ENCODE measurements at regions of chr1 and their contacts with region 1.

Region 1: DNA sequence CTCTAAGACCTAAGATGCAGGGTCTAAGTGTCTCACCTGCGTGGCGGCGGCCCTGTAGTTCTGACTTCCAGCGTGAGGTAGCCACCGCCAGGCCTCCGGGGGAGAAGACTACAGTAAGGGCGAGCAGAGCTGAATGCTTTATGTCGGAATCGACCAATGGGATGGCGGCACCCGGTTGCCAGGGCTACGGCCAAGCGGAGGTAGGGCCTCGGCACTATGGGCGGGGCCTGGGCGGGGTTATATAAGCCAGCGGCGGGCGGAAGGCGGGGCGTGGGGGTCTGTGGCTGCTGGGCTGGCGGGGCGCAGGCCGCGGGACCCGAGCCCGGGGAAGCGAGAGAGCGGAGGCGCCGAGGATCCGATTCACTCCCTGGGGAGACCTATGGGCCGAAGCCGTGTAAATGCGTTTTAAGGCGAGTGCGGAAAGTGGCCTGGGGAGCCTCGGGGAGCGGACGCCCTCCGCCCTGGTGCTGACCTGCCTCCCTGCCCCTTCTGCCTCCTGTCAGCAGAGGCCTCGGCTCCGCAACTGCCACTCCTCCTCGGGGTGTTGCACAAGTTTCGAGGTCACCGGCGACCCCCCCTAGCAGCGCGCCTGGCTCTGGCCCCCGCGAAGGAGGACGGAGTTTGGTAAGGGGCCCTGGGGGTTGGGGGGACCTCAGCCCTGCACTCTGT is at the start of gene AZIN2:
- DNase-seq: peak; percentile 98
- ATAC-seq: peak; percentile 99
- total RNA-seq, gene AZIN2: 1.8 to 2.6 TPM

Region 2: GRCh38 chr1:32817159-32817814 is 263.7 kb before region 1 on chr1 and contains the starts of genes S100PBP and YARS1:
- intact Hi-C with region 1: no loop called
- DNase-seq: peak; percentile 99
- ATAC-seq: peak; percentile 97 to 98
- total RNA-seq, gene S100PBP: 16.2 to 17.5 TPM
- total RNA-seq, gene YARS1: 36.7 to 70.0 TPM

Region 3: DNA sequence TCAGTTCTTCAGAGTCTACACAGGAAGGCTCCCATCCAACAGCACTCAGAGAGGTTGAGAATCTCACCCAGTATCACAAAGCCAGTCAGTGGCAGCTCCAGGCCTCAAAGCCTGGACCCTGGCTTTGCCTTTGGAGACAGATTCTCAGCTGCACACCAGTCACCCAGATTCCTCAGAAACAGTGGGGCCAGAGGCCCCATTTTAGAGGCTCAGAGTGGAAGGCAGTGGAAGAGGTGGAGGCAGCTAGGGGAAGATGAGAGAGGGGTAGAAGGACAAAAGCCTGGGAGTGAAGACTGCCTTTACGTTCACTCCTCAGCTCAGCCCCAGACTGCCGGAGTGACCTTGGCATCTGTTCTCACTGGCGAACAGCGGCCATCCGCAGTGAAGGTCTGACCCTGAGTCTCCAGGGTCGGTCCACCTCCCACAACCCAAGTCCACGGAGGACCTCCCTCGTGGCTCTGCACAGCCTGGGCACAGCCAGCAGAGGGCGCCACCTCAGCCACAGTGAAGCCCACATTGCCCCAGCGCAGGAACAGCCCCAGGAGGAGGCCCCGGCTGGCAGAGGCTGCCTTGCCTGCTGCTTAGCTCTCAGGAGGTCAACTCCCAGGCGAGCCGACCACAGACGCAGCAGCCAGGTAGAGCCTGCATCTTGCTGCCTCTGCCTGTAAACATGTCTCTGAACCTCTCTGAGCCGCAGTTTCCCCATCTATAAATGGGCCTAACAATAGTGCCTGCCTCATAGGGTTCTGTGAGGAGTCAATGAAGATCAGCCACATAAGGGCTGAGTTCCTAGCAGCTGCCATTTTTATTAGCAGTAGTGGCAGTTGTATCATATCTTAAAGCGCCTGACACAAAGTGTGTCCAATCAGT is 204.4 kb before region 1 on chr1:
- intact Hi-C with region 1: loop called in 1 of 2 experiments (anchors 10 kb)
- DNase-seq: peak; percentile 60
- ATAC-seq: peak; percentile 38 to 63

Region 4: GRCh38 chr1:32933742-32934322 is 147.2 kb before region 1 on chr1:
- intact Hi-C with region 1: loop called (anchors 5 to 10 kb)
- DNase-seq: no peak
- ATAC-seq: peak; percentile 31 to 48

Region 5: DNA sequence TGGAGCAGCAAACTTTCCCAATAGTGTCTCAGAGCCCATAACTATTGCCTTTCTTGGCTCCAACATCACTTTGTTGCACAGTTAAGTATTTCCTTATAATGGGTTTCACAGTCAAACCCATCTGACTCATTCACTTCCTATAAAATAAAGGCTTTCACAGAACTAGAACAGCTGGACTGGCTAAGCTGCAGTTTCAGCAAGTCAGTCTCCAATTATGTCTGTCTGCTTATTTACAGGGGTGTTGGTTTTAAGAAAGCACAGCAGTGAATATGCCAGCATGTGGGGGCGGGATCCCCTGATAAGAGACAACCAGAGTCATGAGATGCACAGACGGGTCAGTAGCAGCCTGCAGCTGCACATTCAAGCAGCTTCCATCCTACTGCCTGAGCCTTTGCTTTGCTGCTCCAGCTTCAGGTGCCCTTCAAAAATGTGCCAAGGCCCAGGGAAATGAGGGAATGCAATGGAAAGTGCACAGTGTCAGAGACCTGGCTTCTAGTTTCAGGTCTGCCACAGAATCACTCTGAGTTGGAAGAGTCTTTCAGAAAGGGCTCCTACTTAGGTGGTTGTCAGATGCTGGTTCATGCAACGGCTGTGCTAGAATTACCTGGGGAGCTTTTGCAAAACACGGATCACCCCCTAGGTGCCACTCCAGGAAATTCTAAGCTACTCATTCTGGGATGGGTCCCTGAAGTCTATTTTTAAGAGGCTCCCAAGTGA is 141.2 kb before region 1 on chr1:
- intact Hi-C with region 1: loop called in 1 of 2 experiments (anchors 10 kb)
- DNase-seq: peak; percentile 75
- ATAC-seq: peak; percentile 82 to 92